WTC11 (cell line): ENCODE measurements at regions of chr17 and their contacts with region 1.

Region 1: GRCh38 chr17:49260011-49260921 is 29.7 kb upstream of the PHOSPHO1 start:
- DNase-seq: peak; percentile 48
- ATAC-seq: peak; percentile 75
- H3K4me3 Mint-ChIP-seq: peak overlapping the region; percentile 80
- H3K27ac Mint-ChIP-seq: no peak overlapping the region
- H3K4me1 Mint-ChIP-seq: peaks cover 8% of the 10 kb centered on the region
- H3K27me3 Mint-ChIP-seq: peaks cover 27% of the 10 kb centered on the region
- CTCF ChIP-seq: no peak

Region 2: GRCh38 chr17:49187301-49187700 is 73.0 kb before region 1 on chr17:
- CTCF ChIA-PET with region 1: no interaction called
- POLR2A ChIA-PET with region 1: no interaction called
- DNase-seq: no peak
- ATAC-seq: no peak
- H3K4me3 Mint-ChIP-seq: no peak overlapping the region
- H3K27ac Mint-ChIP-seq: no peak overlapping the region
- H3K4me1 Mint-ChIP-seq: peaks cover 3% of the 10 kb centered on the region
- H3K27me3 Mint-ChIP-seq: no peaks in the 10 kb centered on the region; the same call in 1 of the 2 replicates
- CTCF ChIP-seq: no peak

Region 3: DNA sequence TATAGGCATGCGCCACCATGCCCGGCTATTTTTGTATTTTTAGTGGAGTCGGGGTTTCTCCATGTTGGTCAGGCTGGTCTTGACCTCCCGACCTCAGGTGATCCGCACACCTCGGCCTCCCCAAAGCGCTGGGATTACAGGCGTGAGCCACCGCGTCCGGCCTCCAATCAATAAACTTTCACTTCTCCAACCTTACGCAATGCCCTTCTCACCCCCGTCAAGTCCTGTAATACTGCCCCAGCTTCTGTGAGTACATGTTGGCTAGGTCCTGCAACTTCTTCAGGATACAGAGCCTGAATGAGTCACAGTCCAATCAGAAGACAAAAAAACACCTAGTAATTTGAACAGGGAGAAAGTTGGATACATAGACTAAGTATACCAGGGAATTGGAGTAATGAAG is 17.4 kb after region 1 on chr17:
- CTCF ChIA-PET with region 1: interaction called, 19 read pairs
- POLR2A ChIA-PET with region 1: no interaction called
- DNase-seq: no peak
- ATAC-seq: no peak
- H3K4me3 Mint-ChIP-seq: no peak overlapping the region
- H3K27ac Mint-ChIP-seq: peak overlapping the region; percentile 5; the same call in 1 of the 2 replicates
- H3K4me1 Mint-ChIP-seq: peaks cover 23% of the 10 kb centered on the region
- H3K27me3 Mint-ChIP-seq: no peaks in the 10 kb centered on the region; the same call in 1 of the 2 replicates
- CTCF ChIP-seq: no peak

Region 4: GRCh38 chr17:49343273-49343672 is 83.0 kb after region 1 on chr17:
- CTCF ChIA-PET with region 1: no interaction called
- POLR2A ChIA-PET with region 1: no interaction called
- DNase-seq: no peak
- ATAC-seq: no peak
- H3K4me3 Mint-ChIP-seq: no peak overlapping the region
- H3K27ac Mint-ChIP-seq: no peak overlapping the region
- H3K4me1 Mint-ChIP-seq: peaks cover 17% of the 10 kb centered on the region
- H3K27me3 Mint-ChIP-seq: no peaks in the 10 kb centered on the region
- CTCF ChIP-seq: no peak

Region 5: GRCh38 chr17:49433000-49433694 is 172.9 kb after region 1 on chr17:
- CTCF ChIA-PET with region 1: no interaction called
- POLR2A ChIA-PET with region 1: no interaction called
- DNase-seq: no peak
- ATAC-seq: no peak
- H3K4me3 Mint-ChIP-seq: no peak overlapping the region
- H3K27ac Mint-ChIP-seq: no peak overlapping the region
- H3K4me1 Mint-ChIP-seq: peaks cover 12% of the 10 kb centered on the region
- H3K27me3 Mint-ChIP-seq: peaks cover 11% of the 10 kb centered on the region
- CTCF ChIP-seq: no peak